K562 (cell line): ENCODE measurements at regions of chrX and their contacts with region 1.

Region 1: GRCh38 chrX:13101441-13102139 is 57.2 kb upstream of the FAM9C start:
- DNase-seq: peak; percentile 50 to 84 (median 66)
- ATAC-seq: peak; percentile 99
- H3K4me3 ChIP-seq: no peak overlapping the region
- H3K27ac ChIP-seq: peak overlapping the region; percentile 38; the same call in 2 of the 3 replicates
- H3K4me1 ChIP-seq: peaks cover 0 to 24% of the 10 kb centered on the region in 2 experiments; a peak in 4 of 5 replicates
- H3K27me3 ChIP-seq: no peaks in the 10 kb centered on the region
- CTCF ChIP-seq: no peak
- EP300 ChIP-seq: 0 out of 2 replicates have a peak, but pooled peaks have one; percentile 41
- POLR2A ChIP-seq: no peak
- RAD21 ChIP-seq: no peak

Region 2: DNA sequence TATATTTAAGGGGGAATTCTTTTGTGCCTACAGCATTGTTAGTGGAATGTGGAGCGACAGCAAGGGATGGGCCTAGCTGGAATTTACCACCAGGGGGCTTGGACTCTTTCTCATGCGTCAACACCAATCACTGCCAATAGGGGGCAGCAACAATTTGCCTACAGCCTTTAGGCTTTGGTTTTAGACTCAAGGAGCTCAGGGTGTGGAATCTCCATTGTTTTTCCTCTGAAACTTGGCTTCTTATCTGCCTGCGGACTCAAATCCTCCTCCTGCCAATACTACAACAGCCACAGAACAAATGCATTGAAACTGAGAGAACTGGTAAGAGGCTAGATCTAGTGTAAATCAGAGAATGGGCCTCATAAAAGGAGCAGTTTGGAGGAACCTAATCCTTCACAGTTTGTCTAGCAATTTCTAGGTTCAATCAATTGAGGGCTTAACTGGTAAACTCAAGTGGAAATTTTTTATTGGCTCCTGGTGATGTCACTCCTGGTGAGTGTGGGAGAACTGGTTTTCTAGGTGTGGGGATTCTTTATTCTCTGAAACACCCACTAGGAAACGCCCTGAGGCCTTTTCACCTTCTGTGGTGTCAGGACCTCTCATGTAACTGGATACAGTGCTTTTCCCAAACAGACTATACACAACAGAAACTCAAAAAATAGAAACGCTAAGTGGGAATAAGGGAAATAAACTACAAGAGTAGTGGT is 154.6 kb before region 1 on chrX:
- CTCF ChIA-PET with region 1: no interaction called
- POLR2A ChIA-PET with region 1: no interaction called
- in situ Hi-C with region 1: no loop called
- intact Hi-C with region 1: loop called (anchors 2 kb)
- DNase-seq: peak; percentile 70 to 89 (median 72)
- ATAC-seq: peak; percentile 79
- H3K4me3 ChIP-seq: no peak overlapping the region
- H3K27ac ChIP-seq: peak overlapping the region; percentile 79
- H3K4me1 ChIP-seq: peaks cover 5 to 55% of the 10 kb centered on the region in 2 experiments; a peak in 4 of 5 replicates
- H3K27me3 ChIP-seq: no peaks in the 10 kb centered on the region
- CTCF ChIP-seq: peak; percentile 97 to 100 (median 100)
- EP300 ChIP-seq: peak; percentile 46; the same call in 1 of the 2 replicates
- POLR2A ChIP-seq: no peak
- RAD21 ChIP-seq: peak; percentile 76 to 88

Region 3: DNA sequence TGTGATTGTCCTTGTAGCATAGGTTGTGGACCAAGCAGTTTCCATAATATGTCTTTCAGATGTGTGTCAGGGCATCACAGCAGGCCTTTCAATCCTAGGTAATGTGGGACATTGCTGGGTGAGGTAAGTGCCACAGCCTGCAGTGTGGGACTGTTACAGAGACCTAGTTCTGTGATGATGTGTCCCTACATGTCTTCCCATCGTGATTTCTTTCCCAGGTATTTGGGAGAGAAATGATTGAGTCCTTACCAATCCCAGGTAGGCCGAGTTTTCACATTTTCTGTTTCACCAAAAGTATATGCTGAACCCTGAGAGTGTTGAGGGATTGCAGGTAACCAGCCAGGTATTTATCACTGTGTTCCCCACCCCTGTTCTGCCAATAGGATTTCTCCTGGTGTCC is 228.9 kb after region 1 on chrX:
- CTCF ChIA-PET with region 1: no interaction called
- POLR2A ChIA-PET with region 1: no interaction called
- in situ Hi-C with region 1: no loop called
- intact Hi-C with region 1: no loop called
- DNase-seq: no peak
- ATAC-seq: no peak
- H3K4me3 ChIP-seq: no peak overlapping the region
- H3K27ac ChIP-seq: no peak overlapping the region
- H3K4me1 ChIP-seq: no peaks in the 10 kb centered on the region
- H3K27me3 ChIP-seq: no peaks in the 10 kb centered on the region
- CTCF ChIP-seq: no peak
- EP300 ChIP-seq: no peak
- POLR2A ChIP-seq: no peak
- RAD21 ChIP-seq: no peak